OCI-LY7 (cell line): ENCODE measurements at regions of chr2 and their contacts with region 1.

Region 1: DNA sequence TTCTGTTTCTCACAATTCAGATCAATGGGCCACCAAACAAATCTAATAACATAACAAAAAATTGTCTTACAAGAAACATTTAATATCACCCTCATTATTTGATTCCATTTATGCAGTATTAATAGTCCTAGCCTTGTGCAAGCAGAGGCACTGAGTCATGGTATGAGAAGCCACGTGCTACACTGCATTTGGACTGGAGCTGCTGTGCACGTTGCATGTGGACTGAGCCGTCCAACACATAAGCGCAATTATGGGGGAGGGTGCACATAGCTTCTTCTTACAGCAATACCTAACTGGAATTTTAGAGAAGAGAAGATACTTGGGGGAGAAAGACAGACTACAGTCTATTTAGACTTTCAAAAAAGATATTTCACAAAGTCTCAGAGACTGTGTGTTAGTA is 329.6 kb upstream of the ID2 start:
- DNase-seq: no peak
- H3K4me3 ChIP-seq: no peak overlapping the region
- H3K27ac ChIP-seq: no peak overlapping the region
- H3K4me1 ChIP-seq: no peaks in the 10 kb centered on the region
- CTCF ChIP-seq: no peak

Region 2: DNA sequence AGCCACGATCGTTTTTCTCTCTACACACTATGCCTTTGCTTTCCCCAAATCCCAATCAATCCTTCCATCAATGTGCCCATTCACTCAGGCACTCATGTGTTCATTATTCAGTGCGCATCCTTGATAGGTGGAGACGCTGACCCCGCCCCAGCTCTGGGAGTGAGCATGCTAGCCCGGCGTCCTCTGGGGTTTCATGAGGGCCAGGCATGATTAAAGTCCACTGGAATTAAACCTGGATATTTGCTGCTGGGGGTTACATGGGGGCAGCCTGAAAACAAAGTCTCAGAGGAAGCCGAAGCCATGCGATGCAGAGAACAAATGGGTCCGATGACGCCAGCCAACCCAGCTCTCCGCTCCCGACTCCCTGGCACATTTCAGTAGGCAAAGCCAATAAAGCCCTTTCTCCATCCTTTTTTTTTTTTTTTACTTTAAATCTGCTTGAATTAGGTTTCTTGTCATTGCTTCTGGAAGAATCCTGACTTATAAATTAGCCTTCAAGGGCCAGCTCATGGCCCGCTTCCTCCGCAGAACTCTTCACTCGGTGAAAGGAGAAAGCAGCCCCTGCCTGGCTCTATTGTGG is 13.1 kb after region 1 on chr2:
- CTCF ChIA-PET with region 1: no interaction called
- POLR2A ChIA-PET with region 1: interaction called, 10 read pairs
- intact Hi-C with region 1: no loop called
- DNase-seq: no peak
- H3K4me3 ChIP-seq: no peak overlapping the region
- H3K27ac ChIP-seq: no peak overlapping the region
- H3K4me1 ChIP-seq: peaks cover 7% of the 10 kb centered on the region
- CTCF ChIP-seq: no peak